Naive thymus-derived CD4-positive, alpha-beta T cell (primary cell): ENCODE measurements at regions of chr13 and their contacts with region 1.

Region 1: DNA sequence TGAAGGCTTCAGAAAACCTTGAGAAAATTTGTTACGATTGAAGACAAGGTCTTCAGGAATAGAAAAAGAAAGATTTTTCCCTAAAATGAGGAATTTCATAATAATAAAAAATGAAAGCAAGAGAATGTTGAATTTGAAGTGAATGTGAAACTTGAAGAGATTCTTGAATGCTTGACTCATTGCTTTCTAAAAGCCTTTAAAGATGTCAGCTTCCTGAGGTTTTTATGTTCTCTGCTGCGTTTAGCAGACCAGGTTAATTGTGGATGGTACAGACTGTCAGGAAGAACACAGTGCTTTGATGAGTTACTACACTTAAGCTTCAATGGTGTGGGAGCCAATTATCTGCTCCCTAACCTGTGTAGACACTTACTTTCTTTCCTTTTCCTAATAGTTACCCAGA is 96.3 kb upstream of the FNDC3A start:
- DNase-seq: no peak
- ATAC-seq: no peak
- H3K4me3 ChIP-seq: no peak overlapping the region
- H3K4me3 Mint-ChIP-seq: peak overlapping the region in 1 of 10 donors; percentile 18
- H3K27ac ChIP-seq: no peak overlapping the region
- H3K27ac Mint-ChIP-seq: peak overlapping the region in 2 of 9 donors; percentile 0 to 25
- H3K4me1 ChIP-seq: peaks cover 0 to 3% of the 10 kb centered on the region in 2 donors
- H3K4me1 Mint-ChIP-seq: peaks cover 3 to 43% (median 9%) of the 10 kb centered on the region in 7 donors
- H3K27me3 ChIP-seq: no peaks in the 10 kb centered on the region
- H3K27me3 Mint-ChIP-seq: peaks cover 0 to 10% (median 0%) of the 10 kb centered on the region in 5 donors

Region 2: GRCh38 chr13:48902368-48902767 is 22.9 kb after region 1 on chr13:
- CTCF ChIA-PET with region 1: no interaction called
- POLR2A ChIA-PET with region 1: no interaction called
- intact Hi-C with region 1: loop called in 1 of 2 experiments (anchors 2 kb)
- DNase-seq: no peak
- ATAC-seq: no peak
- H3K4me3 ChIP-seq: no peak overlapping the region
- H3K4me3 Mint-ChIP-seq: no peak overlapping the region
- H3K27ac ChIP-seq: no peak overlapping the region
- H3K27ac Mint-ChIP-seq: no peak overlapping the region
- H3K4me1 ChIP-seq: no peaks in the 10 kb centered on the region
- H3K4me1 Mint-ChIP-seq: peaks cover 0 to 6% (median 0%) of the 10 kb centered on the region in 7 donors
- H3K27me3 ChIP-seq: no peaks in the 10 kb centered on the region
- H3K27me3 Mint-ChIP-seq: peaks cover 21 to 32% (median 26%) of the 10 kb centered on the region in 5 donors